Mammary epithelial cell (primary cell): ENCODE measurements at regions of chr10 and their contacts with region 1.

Region 1: GRCh38 chr10:784403-785088 is 95.1 kb upstream of the DIP2C start:
- DNase-seq: peak; percentile 58
- H3K4me3 ChIP-seq: peak overlapping the region; percentile 11 to 29 (median 28)
- H3K27ac ChIP-seq: no peak overlapping the region
- H3K4me1 ChIP-seq: peaks cover 2% of the 10 kb centered on the region
- H3K27me3 ChIP-seq: peaks cover 7% of the 10 kb centered on the region
- CTCF ChIP-seq: peak in 1 of 2 donors; percentile 29

Region 2: GRCh38 chr10:178208-178607 is 606.3 kb before region 1 on chr10:
- CTCF ChIA-PET with region 1: no interaction called
- dilution Hi-C with region 1: no loop called
- in situ Hi-C with region 1: no loop called
- intact Hi-C with region 1: loop called (anchors 2 kb)
- DNase-seq: peak; percentile 19
- H3K4me3 ChIP-seq: no peak overlapping the region
- H3K27ac ChIP-seq: no peak overlapping the region
- H3K4me1 ChIP-seq: no peaks in the 10 kb centered on the region
- H3K27me3 ChIP-seq: no peaks in the 10 kb centered on the region
- CTCF ChIP-seq: peak; percentile 21 to 37

Region 3: GRCh38 chr10:239109-239508 is 545.4 kb before region 1 on chr10:
- CTCF ChIA-PET with region 1: no interaction called
- dilution Hi-C with region 1: no loop called
- in situ Hi-C with region 1: no loop called
- intact Hi-C with region 1: loop called (anchors 2 kb)
- DNase-seq: peak; percentile 75
- H3K4me3 ChIP-seq: no peak overlapping the region
- H3K27ac ChIP-seq: no peak overlapping the region
- H3K4me1 ChIP-seq: no peaks in the 10 kb centered on the region
- H3K27me3 ChIP-seq: no peaks in the 10 kb centered on the region
- CTCF ChIP-seq: no peak

Region 4: DNA sequence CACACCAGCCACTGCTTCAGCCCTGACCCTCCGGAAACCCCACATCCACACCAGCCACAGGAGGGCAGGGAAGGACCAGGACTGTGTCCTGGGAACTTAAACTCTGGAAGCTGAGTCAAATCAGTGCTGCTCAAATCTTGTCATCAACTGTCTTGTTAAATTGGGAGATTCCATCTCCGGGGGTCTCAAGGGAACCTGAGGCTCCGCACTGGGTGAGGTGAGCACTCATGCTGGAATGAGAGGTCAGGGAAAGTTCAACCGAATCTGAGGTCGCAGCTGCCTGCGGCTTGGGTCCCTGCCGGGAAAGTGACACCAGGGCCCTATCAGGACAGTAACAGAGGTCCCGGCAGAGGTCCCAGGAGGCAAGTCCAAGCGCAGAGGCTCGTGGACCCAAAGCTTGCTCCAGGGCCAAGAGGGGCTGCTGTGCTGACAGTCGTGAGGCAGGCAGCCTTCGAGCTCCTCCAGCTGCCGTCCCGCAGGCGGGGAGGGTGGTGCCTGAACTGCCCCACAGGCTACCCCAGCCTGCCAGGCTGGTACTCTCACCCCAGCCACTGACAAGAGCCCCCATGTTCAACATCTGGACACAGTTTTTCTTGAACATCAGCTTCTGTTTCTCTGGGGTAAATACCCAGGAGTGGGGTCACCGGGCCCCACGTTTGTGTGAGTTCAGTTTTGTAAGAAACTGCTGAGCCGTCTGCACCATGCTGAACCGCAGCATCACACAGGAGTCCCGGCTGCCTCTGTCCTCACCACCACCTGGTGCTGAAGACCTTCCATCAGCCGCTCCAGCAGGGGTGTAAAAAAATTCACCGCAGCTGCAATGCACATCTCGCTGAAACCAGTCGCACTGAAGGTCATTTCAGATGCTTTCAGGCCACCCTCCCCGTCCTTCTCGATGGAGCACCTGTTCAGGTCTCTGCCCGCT is 196.0 kb before region 1 on chr10:
- CTCF ChIA-PET with region 1: interaction called, 3 read pairs
- dilution Hi-C with region 1: no loop called
- in situ Hi-C with region 1: no loop called
- intact Hi-C with region 1: loop called (anchors 10 kb)
- DNase-seq: no peak
- H3K4me3 ChIP-seq: no peak overlapping the region
- H3K27ac ChIP-seq: no peak overlapping the region
- H3K4me1 ChIP-seq: no peaks in the 10 kb centered on the region
- H3K27me3 ChIP-seq: no peaks in the 10 kb centered on the region
- CTCF ChIP-seq: no peak

Region 5: DNA sequence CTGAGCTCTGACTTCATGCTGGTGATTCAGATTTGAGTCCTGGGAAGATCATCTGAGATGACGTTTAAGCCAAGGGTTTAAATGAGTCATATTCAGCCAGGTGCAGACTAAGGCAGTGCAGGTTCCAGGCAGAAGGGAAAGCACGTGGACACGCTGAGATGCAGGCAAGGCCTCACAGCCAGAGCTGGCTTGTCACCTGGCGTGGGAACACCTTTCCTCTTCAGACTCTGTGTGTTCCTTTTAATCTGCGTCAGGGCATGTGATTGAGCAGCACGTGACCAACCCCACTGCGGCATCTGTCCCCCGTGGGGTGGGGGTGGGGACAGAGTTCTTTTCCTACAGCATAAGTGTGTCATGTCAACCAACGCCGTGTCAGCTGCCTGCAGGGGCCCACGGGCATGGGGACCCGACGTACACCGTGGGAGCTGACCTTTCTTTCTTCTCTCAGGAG is 251.8 kb after region 1 on chr10:
- CTCF ChIA-PET with region 1: no interaction called
- dilution Hi-C with region 1: no loop called
- in situ Hi-C with region 1: no loop called
- intact Hi-C with region 1: no loop called
- DNase-seq: peak; percentile 93
- H3K4me3 ChIP-seq: no peak overlapping the region
- H3K27ac ChIP-seq: peak overlapping the region; percentile 13
- H3K4me1 ChIP-seq: peaks cover 17% of the 10 kb centered on the region
- H3K27me3 ChIP-seq: no peaks in the 10 kb centered on the region
- CTCF ChIP-seq: no peak